HCT116 (cell line): ENCODE measurements at regions of chr10 and their contacts with region 1.

Region 1: GRCh38 chr10:32980558-32981468 is 22.8 kb upstream of the ITGB1 start:
- DNase-seq: peak; percentile 96
- ATAC-seq: peak; percentile 86
- H3K4me3 ChIP-seq: peak overlapping the region; percentile 49 to 55
- H3K27ac ChIP-seq: peak overlapping the region; percentile 71
- H3K4me1 ChIP-seq: peaks cover 55 to 68% of the 10 kb centered on the region in 2 experiments
- H3K27me3 ChIP-seq: no peaks in the 10 kb centered on the region
- CTCF ChIP-seq: peak in 1 of 3 experiments; percentile 35; a peak in 2 of 6 replicates
- POLR2A ChIP-seq: no peak
- RAD21 ChIP-seq: peak; percentile 31; the same call in 1 of the 2 replicates

Region 2: GRCh38 chr10:32950591-32951108 is 30.2 kb before region 1 on chr10:
- CTCF ChIA-PET with region 1: no interaction called
- POLR2A ChIA-PET with region 1: interaction called, 12 read pairs
- RAD21 ChIA-PET with region 1: no interaction called
- intact Hi-C with region 1: no loop called
- DNase-seq: no peak
- ATAC-seq: no peak
- H3K4me3 ChIP-seq: no peak overlapping the region
- H3K27ac ChIP-seq: no peak overlapping the region
- H3K4me1 ChIP-seq: peaks cover 86 to 90% of the 10 kb centered on the region in 2 experiments
- H3K27me3 ChIP-seq: no peaks in the 10 kb centered on the region
- CTCF ChIP-seq: no peak
- POLR2A ChIP-seq: no peak
- RAD21 ChIP-seq: no peak

Region 3: DNA sequence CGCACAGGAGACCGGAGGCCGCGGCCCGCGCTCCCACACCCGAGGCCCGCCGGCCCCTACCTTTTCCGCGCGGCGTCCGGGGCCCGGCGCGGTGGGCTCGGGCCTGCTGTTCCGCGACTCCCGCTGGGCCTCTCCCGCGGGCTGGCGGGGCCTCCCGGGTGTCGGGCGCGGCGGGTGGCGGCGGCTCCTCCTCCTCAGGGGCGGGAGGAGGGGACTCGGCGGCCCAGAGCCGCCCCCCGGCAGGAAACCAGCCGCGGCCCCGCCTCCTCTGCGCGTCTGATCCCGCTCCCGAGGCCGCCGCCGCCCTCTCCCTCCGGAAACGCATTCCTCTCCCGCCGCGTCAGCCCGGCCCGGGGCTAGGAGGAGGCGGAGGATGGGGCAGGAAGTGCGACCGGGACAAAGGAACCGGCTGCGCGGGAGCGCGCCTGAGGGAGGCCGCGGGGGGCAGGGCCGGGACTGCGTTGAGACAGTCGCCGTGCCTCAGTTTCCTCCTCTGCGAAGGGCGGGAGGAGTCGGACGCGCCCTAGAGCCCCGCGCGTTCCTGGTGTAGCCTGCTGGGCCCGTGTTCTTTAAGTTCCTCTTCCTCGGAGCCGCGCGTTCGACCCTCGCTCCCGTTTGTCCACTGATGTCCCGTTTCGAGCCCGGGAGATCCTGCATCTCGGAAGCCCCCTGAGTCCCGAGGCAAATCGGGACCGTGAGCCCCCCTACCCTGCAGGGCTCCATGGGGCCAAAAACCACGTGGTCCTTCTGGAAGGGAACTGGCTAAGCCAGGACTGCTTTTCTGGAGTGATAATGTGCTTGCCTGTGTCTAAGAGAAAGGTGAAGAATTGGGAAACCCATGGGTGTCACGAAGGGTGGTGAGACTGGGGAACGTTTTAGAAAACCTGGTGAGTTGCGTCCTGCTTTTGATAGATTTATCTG is 22.5 kb before region 1 on chr10 and contains the start of gene ITGB1:
- CTCF ChIA-PET with region 1: interaction called, 3 read pairs
- POLR2A ChIA-PET with region 1: interaction called, 19 read pairs
- RAD21 ChIA-PET with region 1: no interaction called
- intact Hi-C with region 1: loop called (anchors 1 kb)
- DNase-seq: peak; percentile 83
- ATAC-seq: peak; percentile 86
- H3K4me3 ChIP-seq: peak within 1 kb of the TSS; percentile 80 to 87
- H3K27ac ChIP-seq: peak within 1 kb of the TSS; percentile 94
- H3K4me1 ChIP-seq: peaks cover 59 to 85% of the 10 kb centered on the region in 2 experiments
- H3K27me3 ChIP-seq: no peaks in the 10 kb centered on the region
- CTCF ChIP-seq: no peak
- POLR2A ChIP-seq: no peak
- RAD21 ChIP-seq: peak; percentile 21; the same call in 1 of the 2 replicates
- total RNA-seq, gene ITGB1: 366 TPM